Activated CD8-positive, alpha-beta T cell treated with anti-CD3 and anti-CD28 coated beads for 36 hours (primary cell): ENCODE measurements at regions of chr6 and their contacts with region 1.

Region 1: DNA sequence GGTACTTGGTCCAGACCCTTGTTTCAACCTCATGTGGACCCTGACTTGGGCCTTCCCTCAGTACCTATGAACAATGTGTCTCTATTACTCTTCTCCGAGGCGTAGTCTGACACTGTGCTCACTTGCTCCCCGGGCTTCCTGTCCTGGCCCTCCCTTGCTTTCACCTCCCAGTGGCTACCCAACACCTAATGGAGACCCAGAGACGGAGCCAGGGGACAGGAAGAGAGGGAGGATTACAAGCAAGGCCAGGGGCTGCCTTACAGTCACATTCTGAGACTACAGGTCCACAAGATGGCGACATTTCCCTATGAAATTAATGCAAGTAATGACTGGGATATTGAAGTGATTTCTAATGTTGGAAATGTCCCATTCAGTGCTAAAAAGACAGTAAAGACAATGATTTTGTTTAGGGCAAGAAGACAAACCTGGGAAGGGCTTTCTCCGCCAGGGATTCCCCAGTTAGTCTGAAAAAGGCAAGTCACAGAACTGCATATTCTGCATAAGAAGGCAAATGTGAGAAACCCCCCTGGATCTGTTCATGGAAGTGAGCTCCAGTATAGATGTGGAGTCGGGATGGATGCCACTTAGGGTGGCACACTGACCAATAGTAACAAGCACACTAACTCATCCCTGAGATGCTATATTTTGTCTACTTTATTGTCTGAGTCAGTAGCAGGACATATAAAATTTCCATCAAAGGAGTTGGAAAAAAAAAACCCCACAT is 44.0 kb upstream of the ZBTB24 start:
- DNase-seq: peak; percentile 70
- ATAC-seq: peak; percentile 90
- H3K4me3 Mint-ChIP-seq: no peak overlapping the region
- H3K27ac Mint-ChIP-seq: no peak overlapping the region
- H3K4me1 Mint-ChIP-seq: peaks cover 2% of the 10 kb centered on the region
- H3K27me3 Mint-ChIP-seq: no peaks in the 10 kb centered on the region
- CTCF ChIP-seq: peak; percentile 72

Region 2: GRCh38 chr6:109508166-109508860 is 18.8 kb before region 1 on chr6:
- CTCF ChIA-PET with region 1: no interaction called
- POLR2A ChIA-PET with region 1: no interaction called
- intact Hi-C with region 1: no loop called
- DNase-seq: no peak
- ATAC-seq: no peak
- H3K4me3 Mint-ChIP-seq: no peak overlapping the region
- H3K27ac Mint-ChIP-seq: no peak overlapping the region
- H3K4me1 Mint-ChIP-seq: no peaks in the 10 kb centered on the region
- H3K27me3 Mint-ChIP-seq: no peaks in the 10 kb centered on the region
- CTCF ChIP-seq: no peak

Region 3: DNA sequence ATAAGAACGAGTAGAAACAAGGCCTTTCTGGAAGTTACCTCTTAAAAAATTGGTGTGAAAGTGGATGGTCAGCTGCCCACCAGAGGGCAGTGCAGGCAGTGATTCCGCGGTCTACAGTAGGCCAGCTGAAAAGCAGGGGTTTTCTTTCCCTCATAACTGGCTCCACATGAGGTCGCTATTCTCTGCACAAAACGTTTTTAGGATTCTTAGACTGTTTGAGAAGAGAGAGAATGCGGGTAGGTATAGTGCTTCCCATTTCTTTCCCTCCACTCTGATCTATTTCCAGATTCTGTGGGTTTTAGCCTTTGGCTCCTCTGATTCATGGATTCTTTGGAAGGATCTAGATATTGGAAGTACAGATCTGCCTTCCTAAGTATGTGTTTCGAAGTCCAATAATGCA is 178.2 kb after region 1 on chr6:
- CTCF ChIA-PET with region 1: interaction called, 3 read pairs
- POLR2A ChIA-PET with region 1: no interaction called
- intact Hi-C with region 1: loop called (anchors 5 kb)
- DNase-seq: peak; percentile 90
- ATAC-seq: peak; percentile 98
- H3K4me3 Mint-ChIP-seq: no peak overlapping the region
- H3K27ac Mint-ChIP-seq: no peak overlapping the region
- H3K4me1 Mint-ChIP-seq: peaks cover 15% of the 10 kb centered on the region
- H3K27me3 Mint-ChIP-seq: no peaks in the 10 kb centered on the region
- CTCF ChIP-seq: peak; percentile 99

Region 4: DNA sequence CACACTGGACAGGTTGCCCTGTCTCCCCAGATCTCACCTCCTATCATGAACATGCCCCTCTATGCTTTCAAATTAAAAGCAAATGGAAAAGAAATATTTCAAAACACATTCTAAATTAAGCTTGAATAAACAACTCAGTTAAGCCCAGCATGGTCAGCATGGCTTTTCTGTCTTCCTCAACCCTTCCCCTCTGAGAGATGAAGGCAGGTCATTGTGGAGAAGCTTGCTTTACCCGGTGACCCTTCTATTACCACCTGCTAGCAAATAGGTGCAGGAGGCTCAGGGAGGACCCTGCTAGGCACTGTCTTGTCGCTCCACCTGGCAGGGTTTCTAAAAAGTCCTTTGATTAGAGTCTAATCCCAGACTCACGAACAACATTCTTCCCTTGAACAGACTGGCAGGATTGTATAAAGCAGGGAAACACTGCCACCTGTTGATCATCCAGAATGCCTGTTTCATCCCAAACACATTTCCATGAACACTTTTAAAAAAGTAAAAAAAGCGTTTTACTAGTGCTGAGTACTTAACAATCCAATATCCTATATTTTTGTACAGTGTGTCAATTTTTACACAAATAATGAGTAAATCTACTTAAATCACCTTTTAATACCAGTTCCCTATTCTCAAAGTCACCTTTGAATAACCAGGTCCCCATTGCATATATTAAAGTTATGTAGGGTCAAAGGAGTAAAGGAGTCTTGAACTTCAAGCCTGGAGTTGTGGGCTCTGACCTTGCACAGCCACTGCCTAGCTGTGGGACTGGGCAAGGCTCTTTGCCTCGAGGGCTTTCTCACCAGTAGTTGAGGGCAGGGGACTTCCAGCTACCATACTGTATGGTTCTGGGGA is 526.6 kb after region 1 on chr6:
- CTCF ChIA-PET with region 1: no interaction called
- POLR2A ChIA-PET with region 1: no interaction called
- intact Hi-C with region 1: loop called (anchors 5 kb)
- DNase-seq: no peak
- ATAC-seq: no peak
- H3K4me3 Mint-ChIP-seq: no peak overlapping the region
- H3K27ac Mint-ChIP-seq: no peak overlapping the region
- H3K4me1 Mint-ChIP-seq: no peaks in the 10 kb centered on the region
- H3K27me3 Mint-ChIP-seq: peaks cover 3% of the 10 kb centered on the region
- CTCF ChIP-seq: peak; percentile 74